Naive thymus-derived CD4-positive, alpha-beta T cell (primary cell): ENCODE measurements at regions of chr11 and their contacts with region 1.

Region 1: DNA sequence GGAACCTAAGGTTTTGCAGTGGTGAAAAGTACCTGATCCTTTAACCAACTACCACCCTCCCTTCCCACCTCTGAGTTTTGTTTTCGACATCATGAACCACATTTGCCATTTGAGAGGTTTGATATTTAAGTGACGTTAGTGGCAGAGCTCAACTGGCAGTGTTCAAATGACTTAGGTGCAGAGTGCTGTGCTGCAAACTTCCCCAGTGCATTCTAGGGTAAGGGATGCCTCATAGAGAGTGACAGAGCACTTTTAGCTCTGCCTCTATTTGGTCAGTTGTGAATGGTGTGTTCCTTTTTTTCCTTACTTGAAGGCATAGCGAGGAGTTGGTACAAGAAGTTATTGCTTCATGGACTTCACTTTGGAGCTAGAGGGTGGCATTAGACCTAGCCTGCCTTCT is 9.4 kb downstream of the BMAL1 start:
- DNase-seq: peak in 3 of 9 donors; percentile 15 to 32 (median 28)
- ATAC-seq: peak; percentile 84
- H3K4me3 ChIP-seq: no peak overlapping the region
- H3K4me3 Mint-ChIP-seq: peak overlapping the region in 2 of 10 donors; percentile 6 to 9
- H3K27ac ChIP-seq: no peak overlapping the region
- H3K27ac Mint-ChIP-seq: peak overlapping the region in 4 of 9 donors; percentile 11 to 64 (median 30)
- H3K4me1 ChIP-seq: peaks cover 8 to 27% of the 10 kb centered on the region in 2 donors
- H3K4me1 Mint-ChIP-seq: peaks cover 61 to 95% (median 85%) of the 10 kb centered on the region in 7 donors
- H3K27me3 ChIP-seq: no peaks in the 10 kb centered on the region
- H3K27me3 Mint-ChIP-seq: no peaks in the 10 kb centered on the region

Region 2: DNA sequence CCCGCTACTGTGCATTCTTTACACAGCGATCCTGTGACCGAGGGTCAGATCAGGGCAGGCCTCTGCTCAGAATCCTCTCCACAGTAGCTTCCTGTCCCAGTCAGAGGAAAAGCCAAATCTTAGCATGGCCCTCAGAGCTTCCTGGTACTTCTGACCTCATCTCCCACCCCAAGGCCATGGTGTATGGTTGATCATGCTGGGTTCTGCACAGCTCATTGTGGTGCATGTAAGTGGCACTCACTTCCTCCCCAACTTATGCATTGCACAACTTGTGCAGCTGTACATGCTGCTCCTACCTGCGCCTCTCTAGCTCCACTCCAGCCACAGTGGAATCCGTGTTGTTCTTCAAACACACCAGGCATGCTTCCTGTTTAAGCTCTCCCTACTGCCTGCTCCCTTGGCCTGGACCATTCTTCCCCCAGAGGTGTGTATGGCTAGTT is 10.9 kb after region 1 on chr11:
- CTCF ChIA-PET with region 1: interaction called, 3 read pairs
- POLR2A ChIA-PET with region 1: interaction called, 4 read pairs
- intact Hi-C with region 1: loop called (anchors 1 to 2 kb)
- DNase-seq: no peak
- ATAC-seq: peak; percentile 82
- H3K4me3 ChIP-seq: no peak overlapping the region
- H3K4me3 Mint-ChIP-seq: peak overlapping the region in 8 of 10 donors; percentile 6 to 66 (median 33)
- H3K27ac ChIP-seq: no peak overlapping the region
- H3K27ac Mint-ChIP-seq: peak overlapping the region in 7 of 9 donors; percentile 4 to 74 (median 50)
- H3K4me1 ChIP-seq: peaks cover 45 to 52% of the 10 kb centered on the region in 2 donors
- H3K4me1 Mint-ChIP-seq: peaks cover 0 to 99% (median 74%) of the 10 kb centered on the region in 7 donors
- H3K27me3 ChIP-seq: no peaks in the 10 kb centered on the region
- H3K27me3 Mint-ChIP-seq: no peaks in the 10 kb centered on the region

Region 3: DNA sequence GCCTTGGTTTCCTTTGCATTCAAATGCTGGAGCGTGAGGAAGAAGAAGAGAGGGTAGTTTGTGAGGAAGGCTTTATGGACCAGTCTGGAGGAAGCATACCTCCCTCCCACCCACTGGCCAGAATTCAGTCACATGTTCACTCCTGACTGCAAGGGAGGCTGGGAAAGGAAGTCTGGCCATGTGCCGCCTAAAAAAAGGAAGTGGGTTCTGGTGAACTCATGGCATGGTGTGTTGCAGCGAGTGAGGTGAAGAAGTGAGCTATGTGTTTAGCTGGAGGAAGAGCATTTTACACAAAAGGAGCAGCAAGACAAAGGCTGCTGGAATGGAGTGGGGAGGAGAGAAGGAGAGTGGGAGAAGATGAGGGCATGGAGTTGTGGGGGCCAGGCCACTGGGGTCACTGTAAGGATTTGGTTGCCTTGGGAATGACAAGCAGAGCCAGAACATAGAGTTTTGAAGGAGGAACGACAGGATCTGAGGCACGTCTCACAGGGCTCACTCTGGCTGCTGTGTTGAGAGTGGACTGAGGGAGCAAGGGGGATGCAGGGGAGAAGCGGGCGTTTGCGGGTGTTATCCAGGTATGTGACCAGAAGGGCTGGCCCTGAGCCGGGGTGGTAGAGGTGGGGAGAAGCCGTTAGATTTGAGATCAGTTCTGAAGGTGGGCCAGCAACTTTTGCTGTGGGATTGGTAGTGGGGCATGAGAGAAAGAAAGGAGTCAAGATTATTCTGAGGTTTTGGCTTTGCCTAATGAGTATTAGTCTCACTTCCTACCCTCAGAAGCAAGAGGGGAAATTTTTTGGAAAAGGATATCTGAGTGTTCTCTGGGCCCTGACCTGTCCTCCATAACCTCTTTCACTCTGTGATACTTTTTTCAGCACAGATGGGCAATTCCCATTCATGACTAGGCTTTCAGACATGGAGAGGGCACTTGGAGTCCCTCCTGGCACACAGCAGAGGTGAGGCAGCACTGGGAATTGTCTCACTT is 16.9 kb after region 1 on chr11:
- CTCF ChIA-PET with region 1: no interaction called
- POLR2A ChIA-PET with region 1: interaction called, 4 read pairs
- intact Hi-C with region 1: loop called in 1 of 2 experiments (anchors 2 kb)
- DNase-seq: no peak
- ATAC-seq: peak; percentile 70
- H3K4me3 ChIP-seq: no peak overlapping the region
- H3K4me3 Mint-ChIP-seq: peak overlapping the region; percentile 2 to 63 (median 45)
- H3K27ac ChIP-seq: no peak overlapping the region
- H3K27ac Mint-ChIP-seq: peak overlapping the region in 4 of 9 donors; percentile 10 to 60 (median 38)
- H3K4me1 ChIP-seq: peaks cover 36 to 53% of the 10 kb centered on the region in 2 donors
- H3K4me1 Mint-ChIP-seq: peaks cover 0 to 56% (median 42%) of the 10 kb centered on the region in 7 donors
- H3K27me3 ChIP-seq: no peaks in the 10 kb centered on the region
- H3K27me3 Mint-ChIP-seq: no peaks in the 10 kb centered on the region